Sigmoid colon (tissue), 7 donors: ENCODE measurements at regions of chr1 and their contacts with region 1.

Region 1: GRCh38 chr1:248858891-248859889 is at the start of gene ZNF692:
- DNase-seq: peak; percentile 99
- H3K4me3 ChIP-seq: peak within 1 kb of the TSS; percentile 43 to 61 (median 58)
- H3K27ac ChIP-seq: peak within 1 kb of the TSS; percentile 91 to 96 (median 92)
- H3K4me1 ChIP-seq: peaks cover 0 to 43% (median 32%) of the 10 kb centered on the region in 4 donors
- H3K27me3 ChIP-seq: no peaks in the 10 kb centered on the region
- CTCF ChIP-seq: no peak
- EP300 ChIP-seq: no peak
- POLR2A ChIP-seq: peak; percentile 62 to 84
- total RNA-seq, gene ZNF692: 23.5 to 59.8 (median 30.9) TPM

Region 2: DNA sequence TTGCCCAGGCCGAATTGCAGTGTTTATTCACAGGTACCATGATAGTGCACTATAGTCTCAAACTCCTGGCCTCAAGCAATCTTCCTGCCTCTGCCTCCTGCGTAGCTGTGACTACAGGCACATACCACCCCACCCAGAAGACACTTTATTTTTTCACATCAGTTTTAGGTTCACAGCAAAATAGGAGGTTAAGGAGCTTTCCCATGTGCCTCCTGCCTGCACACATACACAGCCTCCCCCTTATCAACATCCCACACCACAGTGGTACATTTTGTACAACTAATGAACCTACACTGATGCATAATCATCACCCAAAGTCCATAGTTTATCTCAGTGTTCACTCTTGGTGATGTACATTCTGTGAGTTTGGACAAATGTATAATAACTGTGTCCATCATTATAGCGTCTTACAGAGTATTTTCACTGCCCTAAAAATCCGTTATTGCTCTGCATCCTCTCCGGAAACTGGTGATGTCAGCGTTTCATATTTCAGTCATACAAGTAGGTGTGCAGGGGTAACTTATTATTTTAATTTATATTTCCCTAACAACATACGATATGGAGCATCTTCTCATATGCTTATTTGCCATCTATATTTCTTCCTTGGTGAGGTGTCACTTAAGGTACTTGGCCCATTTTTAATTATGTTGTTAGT is 1202.8 kb before region 1 on chr1:
- intact Hi-C with region 1: no loop called
- DNase-seq: no peak
- H3K4me3 ChIP-seq: no peak overlapping the region
- H3K27ac ChIP-seq: no peak overlapping the region
- H3K4me1 ChIP-seq: no peaks in the 10 kb centered on the region
- H3K27me3 ChIP-seq: no peaks in the 10 kb centered on the region
- CTCF ChIP-seq: no peak
- EP300 ChIP-seq: no peak
- POLR2A ChIP-seq: no peak

Region 3: GRCh38 chr1:248779350-248779749 is 79.8 kb before region 1 on chr1:
- intact Hi-C with region 1: no loop called
- DNase-seq: no peak
- H3K4me3 ChIP-seq: no peak overlapping the region
- H3K27ac ChIP-seq: no peak overlapping the region
- H3K4me1 ChIP-seq: no peaks in the 10 kb centered on the region
- H3K27me3 ChIP-seq: no peaks in the 10 kb centered on the region
- CTCF ChIP-seq: no peak
- EP300 ChIP-seq: no peak
- POLR2A ChIP-seq: no peak

Region 4: GRCh38 chr1:248825909-248826760 is 33.1 kb before region 1 on chr1 and contains the start of gene SH3BP5L:
- intact Hi-C with region 1: loop called (anchors 1 kb)
- DNase-seq: peak; percentile 96
- H3K4me3 ChIP-seq: peak within 1 kb of the TSS; percentile 55 to 93 (median 73)
- H3K27ac ChIP-seq: peak within 1 kb of the TSS; percentile 94 to 98 (median 95)
- H3K4me1 ChIP-seq: peaks cover 0 to 49% (median 49%) of the 10 kb centered on the region in 4 donors
- H3K27me3 ChIP-seq: no peaks in the 10 kb centered on the region
- CTCF ChIP-seq: peak; percentile 32 to 56 (median 48)
- EP300 ChIP-seq: no peak
- POLR2A ChIP-seq: peak; percentile 62 to 80
- total RNA-seq, gene SH3BP5L: 13.7 to 18.3 (median 15.3) TPM